Vagina (tissue), 2 donors: ENCODE measurements at regions of chr3 and their contacts with region 1.

Region 1: DNA sequence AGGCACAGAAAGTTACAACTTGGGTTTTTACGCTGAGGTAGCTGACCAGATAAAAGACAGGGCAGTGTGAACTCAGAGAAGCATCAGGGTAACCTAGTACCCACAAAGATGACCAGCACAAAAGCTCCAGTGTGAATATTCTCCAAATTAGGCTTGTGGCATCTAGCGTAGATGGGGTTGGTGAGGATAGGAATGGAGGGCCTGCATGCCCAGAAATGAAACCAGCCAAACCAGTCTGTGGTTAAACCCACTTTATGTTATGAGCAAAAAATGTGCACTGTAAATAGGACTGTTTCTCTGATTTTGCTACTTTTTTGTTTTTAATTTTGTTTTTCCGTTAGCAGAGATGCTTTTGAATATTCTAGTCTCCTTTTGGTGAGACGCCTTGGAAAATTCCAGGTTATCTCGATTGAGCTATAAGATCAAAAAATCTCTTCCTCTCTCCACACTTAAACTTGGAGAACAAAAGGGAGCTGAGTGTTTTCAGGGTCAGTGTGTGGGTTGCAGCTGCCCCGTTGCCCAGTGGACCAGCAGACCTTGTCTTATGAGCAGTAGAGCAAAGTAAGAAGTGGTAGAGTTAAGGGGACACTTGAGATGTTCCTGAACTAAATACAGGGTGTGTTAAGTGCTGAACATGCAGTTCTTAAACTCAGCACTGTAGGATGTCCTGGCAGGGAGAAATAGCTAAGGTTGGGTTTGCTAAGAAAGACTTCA is 132.9 kb downstream of the C3orf38 start:
- DNase-seq: no peak
- H3K4me3 ChIP-seq: no peak overlapping the region
- H3K27ac ChIP-seq: no peak overlapping the region
- H3K4me1 ChIP-seq: no peaks in the 10 kb centered on the region
- H3K27me3 ChIP-seq: no peaks in the 10 kb centered on the region
- CTCF ChIP-seq: no peak
- POLR2A ChIP-seq: no peak

Region 2: GRCh38 chr3:88248658-88249057 is 34.0 kb before region 1 on chr3:
- intact Hi-C with region 1: loop called (anchors 1 kb)
- DNase-seq: no peak
- H3K4me3 ChIP-seq: no peak overlapping the region
- H3K27ac ChIP-seq: no peak overlapping the region
- H3K4me1 ChIP-seq: no peaks in the 10 kb centered on the region
- H3K27me3 ChIP-seq: no peaks in the 10 kb centered on the region
- CTCF ChIP-seq: no peak
- POLR2A ChIP-seq: no peak